ENCODE measurements at regions of chr3 and their contacts with region 1.

Region 1: GRCh38 chr3:58299839-58300516 is 6.1 kb upstream of the RPP14 start:
- DNase-seq: peak in 1 of 2 donors; percentile 20
- H3K4me3 ChIP-seq: no peak overlapping the region
- H3K27ac ChIP-seq: no peak overlapping the region
- H3K4me1 ChIP-seq: peaks cover 0 to 11% of the 10 kb centered on the region in 2 donors
- H3K27me3 ChIP-seq: no peaks in the 10 kb centered on the region
- CTCF ChIP-seq: peak in 5 of 6 experiments; percentile 18 to 75 (median 51)
- POLR2A ChIP-seq: no peak

Region 2: DNA sequence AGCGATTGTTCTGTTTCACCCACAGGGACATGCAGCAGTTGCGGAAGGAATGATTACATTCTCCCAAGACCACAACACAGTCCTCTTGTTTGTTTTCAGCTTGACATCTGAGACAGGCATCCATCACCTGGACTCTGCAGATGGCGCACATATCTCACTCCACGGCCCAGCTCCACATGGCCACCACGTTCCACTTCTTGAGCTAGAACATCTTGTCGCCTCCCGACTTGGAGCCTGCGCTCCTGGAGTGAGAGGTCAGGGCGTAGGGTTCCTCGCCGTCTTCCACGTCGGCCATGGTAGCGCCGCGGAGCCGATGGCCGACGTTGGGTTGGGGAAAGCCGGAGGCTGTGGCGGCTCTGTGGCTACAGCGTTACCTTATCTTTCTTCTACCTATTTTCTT is 780.3 kb before region 1 on chr3:
- intact Hi-C with region 1: no loop called
- DNase-seq: no peak
- H3K4me3 ChIP-seq: no peak overlapping the region
- H3K27ac ChIP-seq: no peak overlapping the region
- H3K4me1 ChIP-seq: no peaks in the 10 kb centered on the region
- H3K27me3 ChIP-seq: no peaks in the 10 kb centered on the region
- CTCF ChIP-seq: no peak
- POLR2A ChIP-seq: no peak

Region 3: GRCh38 chr3:58008140-58009025 is 291.6 kb before region 1 on chr3 and contains the start of gene FLNB:
- intact Hi-C with region 1: loop called (anchors 10 kb)
- DNase-seq: peak; percentile 69 to 72
- H3K4me3 ChIP-seq: peak within 1 kb of the TSS; percentile 83 to 97 (median 94)
- H3K27ac ChIP-seq: peak within 1 kb of the TSS; percentile 81 to 97 (median 91)
- H3K4me1 ChIP-seq: peaks cover 37 to 43% of the 10 kb centered on the region in 2 donors
- H3K27me3 ChIP-seq: no peaks in the 10 kb centered on the region
- CTCF ChIP-seq: peak; percentile 58 to 98 (median 72)
- POLR2A ChIP-seq: peak; percentile 38 to 87
- total RNA-seq, gene FLNB: 164 to 258 (median 242) TPM

Region 4: DNA sequence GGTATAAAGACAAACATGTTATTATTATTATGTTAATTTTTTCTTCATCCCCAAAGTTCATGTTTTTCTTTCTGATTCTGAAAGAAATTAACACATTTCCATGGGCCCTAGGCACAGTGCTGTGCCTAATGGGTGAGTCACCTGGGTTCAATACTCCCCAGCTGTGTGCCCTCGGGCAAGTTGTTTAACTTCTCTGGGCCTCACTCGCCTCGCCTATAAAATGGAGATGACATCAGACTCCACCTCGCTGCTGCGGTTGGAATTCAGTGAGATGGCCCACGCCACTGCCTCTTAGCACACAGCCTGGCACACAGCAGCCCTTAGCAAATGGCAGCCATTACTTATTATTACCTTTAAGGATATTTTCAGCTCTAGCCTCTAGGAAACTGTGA is 111.8 kb before region 1 on chr3:
- intact Hi-C with region 1: loop called (anchors 5 kb)
- DNase-seq: no peak
- H3K4me3 ChIP-seq: no peak overlapping the region
- H3K27ac ChIP-seq: peak overlapping the region in 1 of 3 donors; percentile 58
- H3K4me1 ChIP-seq: peaks cover 0 to 10% of the 10 kb centered on the region in 2 donors
- H3K27me3 ChIP-seq: no peaks in the 10 kb centered on the region
- CTCF ChIP-seq: no peak
- POLR2A ChIP-seq: no peak

Region 5: GRCh38 chr3:58237238-58237940 is 62.6 kb before region 1 on chr3 and contains the start of gene ABHD6:
- intact Hi-C with region 1: loop called (anchors 5 kb)
- DNase-seq: peak; percentile 73 to 74
- H3K4me3 ChIP-seq: peak within 1 kb of the TSS; percentile 77 to 92 (median 84)
- H3K27ac ChIP-seq: peak within 1 kb of the TSS in 2 of 3 donors; percentile 70 to 73
- H3K4me1 ChIP-seq: peaks cover 0 to 18% of the 10 kb centered on the region in 2 donors
- H3K27me3 ChIP-seq: no peaks in the 10 kb centered on the region
- CTCF ChIP-seq: peak in 3 of 6 experiments; percentile 18 to 66 (median 25)
- POLR2A ChIP-seq: peak in 1 of 2 donors; percentile 39
- total RNA-seq, gene ABHD6: 14.7 to 28.6 (median 18.0) TPM

Region 6: GRCh38 chr3:58441514-58442450 is 141.8 kb after region 1 on chr3:
- intact Hi-C with region 1: no loop called
- DNase-seq: no peak
- H3K4me3 ChIP-seq: no peak overlapping the region
- H3K27ac ChIP-seq: no peak overlapping the region
- H3K4me1 ChIP-seq: no peaks in the 10 kb centered on the region
- H3K27me3 ChIP-seq: no peaks in the 10 kb centered on the region
- CTCF ChIP-seq: no peak
- POLR2A ChIP-seq: no peak

Region 7: GRCh38 chr3:58544541-58544940 is 244.6 kb after region 1 on chr3:
- intact Hi-C with region 1: no loop called
- DNase-seq: no peak
- H3K4me3 ChIP-seq: no peak overlapping the region
- H3K27ac ChIP-seq: no peak overlapping the region
- H3K4me1 ChIP-seq: no peaks in the 10 kb centered on the region
- H3K27me3 ChIP-seq: no peaks in the 10 kb centered on the region
- CTCF ChIP-seq: no peak
- POLR2A ChIP-seq: no peak

Measured in thyroid gland (tissue), 4 donors.